Natural killer cell (primary cell): ENCODE measurements at regions of chrX and their contacts with region 1.

Region 1: GRCh38 chrX:39859991-39860861 is 237.5 kb downstream of the BCOR start:
- DNase-seq: peak; percentile 68 to 75
- ATAC-seq: peak; percentile 66 to 72 (median 71)
- H3K4me3 ChIP-seq: no peak overlapping the region
- H3K4me3 Mint-ChIP-seq: peak overlapping the region; percentile 42
- H3K27ac ChIP-seq: peak overlapping the region; percentile 35
- H3K27ac Mint-ChIP-seq: peak overlapping the region; percentile 58 to 89
- H3K4me1 ChIP-seq: peaks cover 52% of the 10 kb centered on the region
- H3K4me1 Mint-ChIP-seq: peaks cover 23 to 38% of the 10 kb centered on the region in 2 donors
- H3K27me3 ChIP-seq: no peaks in the 10 kb centered on the region
- H3K27me3 Mint-ChIP-seq: peaks cover 0 to 6% of the 10 kb centered on the region in 2 donors
- CTCF ChIP-seq: no peak

Region 2: DNA sequence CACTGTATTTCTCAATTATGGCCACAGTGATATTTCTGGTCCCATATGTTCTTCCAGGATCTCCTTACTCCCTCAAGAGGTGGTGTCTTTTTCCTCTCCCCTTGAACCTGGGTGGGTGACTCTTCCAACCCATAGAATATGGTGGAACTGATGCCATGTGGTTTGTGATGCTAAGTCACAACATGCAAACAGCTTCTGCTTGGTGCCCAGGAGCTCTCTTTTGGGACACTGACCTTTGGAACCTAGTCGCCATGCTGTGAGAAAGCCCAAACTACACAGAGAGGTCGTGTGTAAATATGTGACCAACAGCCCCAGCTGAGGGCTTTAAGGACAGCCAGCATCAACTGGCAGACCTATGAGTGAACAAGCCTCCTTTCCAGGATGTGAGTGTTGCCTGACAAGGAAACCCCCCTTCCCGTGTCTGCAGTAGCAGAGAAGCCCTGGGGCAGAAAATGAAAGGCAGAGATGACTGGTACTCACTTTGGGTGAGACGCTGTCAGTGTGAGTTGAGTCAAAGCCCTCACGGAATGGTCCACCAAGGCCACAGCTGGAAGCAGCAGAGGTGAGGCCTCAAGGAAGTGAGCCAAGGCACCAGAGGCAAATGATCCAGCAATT is 14.1 kb after region 1 on chrX:
- intact Hi-C with region 1: loop called (anchors 1 kb)
- DNase-seq: peak in 1 of 2 donors; percentile 53
- ATAC-seq: peak in 1 of 3 donors; percentile 16
- H3K4me3 ChIP-seq: no peak overlapping the region
- H3K4me3 Mint-ChIP-seq: no peak overlapping the region
- H3K27ac ChIP-seq: no peak overlapping the region
- H3K27ac Mint-ChIP-seq: no peak overlapping the region
- H3K4me1 ChIP-seq: peaks cover 21% of the 10 kb centered on the region
- H3K4me1 Mint-ChIP-seq: peaks cover 9 to 16% of the 10 kb centered on the region in 2 donors
- H3K27me3 ChIP-seq: peaks cover 4% of the 10 kb centered on the region
- H3K27me3 Mint-ChIP-seq: peaks cover 23 to 25% of the 10 kb centered on the region in 2 donors
- CTCF ChIP-seq: no peak

Region 3: DNA sequence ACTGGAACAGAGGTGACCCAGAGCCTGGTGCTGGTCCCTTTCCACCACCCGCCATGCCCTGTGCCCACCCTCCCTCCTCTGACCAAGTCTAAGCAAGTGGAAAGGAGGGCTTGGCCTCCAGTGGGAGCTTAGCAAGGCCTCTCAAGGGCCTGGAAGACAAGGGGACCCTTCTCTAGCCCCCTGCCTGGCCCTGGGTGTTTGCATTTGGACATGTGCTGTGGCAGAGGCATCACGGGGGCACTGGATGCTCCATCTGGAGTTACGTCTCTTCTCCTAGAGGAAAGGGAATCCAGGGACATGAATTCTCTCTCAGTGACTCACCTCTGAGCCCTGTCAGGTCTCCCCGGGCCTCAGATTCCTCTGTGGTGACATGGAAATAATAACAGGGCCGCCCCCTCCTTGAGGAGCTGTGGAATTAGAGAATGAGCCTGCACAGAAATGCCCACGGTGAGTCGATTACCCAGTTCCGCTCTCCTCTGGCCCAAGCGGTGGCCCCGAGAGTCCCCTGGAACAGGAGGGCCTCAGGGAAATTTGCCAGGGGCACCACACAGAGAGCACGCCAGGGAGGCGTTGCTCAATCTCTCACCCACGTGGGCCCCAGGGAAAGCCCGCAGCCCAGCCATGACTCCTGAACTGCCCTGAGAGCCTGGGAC is 47.9 kb after region 1 on chrX:
- intact Hi-C with region 1: no loop called
- DNase-seq: no peak
- ATAC-seq: no peak
- H3K4me3 ChIP-seq: no peak overlapping the region
- H3K4me3 Mint-ChIP-seq: no peak overlapping the region
- H3K27ac ChIP-seq: no peak overlapping the region
- H3K27ac Mint-ChIP-seq: no peak overlapping the region
- H3K4me1 ChIP-seq: peaks cover 12% of the 10 kb centered on the region
- H3K4me1 Mint-ChIP-seq: peaks cover 0 to 16% of the 10 kb centered on the region in 2 donors
- H3K27me3 ChIP-seq: no peaks in the 10 kb centered on the region
- H3K27me3 Mint-ChIP-seq: peaks cover 9 to 20% of the 10 kb centered on the region in 2 donors
- CTCF ChIP-seq: no peak

Region 4: DNA sequence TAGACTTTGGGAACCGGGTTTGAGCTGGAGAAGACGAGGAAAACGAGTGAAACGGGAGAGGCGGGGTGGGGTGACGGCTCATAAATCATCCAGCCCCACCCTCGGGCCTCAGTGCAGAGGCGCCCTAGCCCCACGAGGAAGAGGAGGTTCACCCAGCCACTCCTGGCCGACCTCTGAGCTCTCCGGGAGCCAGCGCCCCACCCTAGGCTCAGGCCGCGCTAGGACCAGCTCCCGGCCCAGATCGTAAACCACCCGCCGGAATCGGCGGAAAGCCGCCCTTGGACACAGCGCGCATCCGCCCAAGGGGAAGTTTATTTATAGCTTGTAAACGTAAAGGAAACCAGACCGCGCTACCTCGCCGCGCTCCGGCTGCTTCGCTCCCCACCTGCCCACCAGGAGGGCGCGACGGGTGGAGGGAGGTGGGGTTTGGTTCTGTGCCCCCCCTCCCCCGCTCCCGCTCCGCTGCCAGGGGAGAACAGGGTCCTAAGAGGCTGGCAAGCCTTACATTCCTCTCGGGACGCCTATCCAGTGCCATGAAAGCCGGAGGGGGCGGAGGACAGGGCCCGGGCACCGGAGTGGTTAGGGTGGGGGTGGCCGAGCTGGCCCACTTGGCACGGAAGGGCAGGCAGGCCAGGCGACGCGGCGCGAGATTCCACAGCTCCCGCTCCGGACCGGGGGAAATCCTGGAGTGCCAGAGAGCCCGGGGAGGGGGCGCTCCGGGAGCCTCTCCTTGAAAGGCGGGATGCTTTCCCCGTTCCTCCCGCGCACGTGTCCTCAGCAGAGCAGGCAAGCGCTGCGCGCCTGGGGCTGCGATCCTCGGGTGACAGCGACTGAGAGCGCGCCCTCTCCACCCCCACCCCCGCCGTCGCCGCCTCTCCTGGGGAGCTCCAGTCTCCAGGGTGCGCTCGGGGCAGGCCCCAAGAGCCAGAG is 153.3 kb after region 1 on chrX:
- intact Hi-C with region 1: loop called (anchors 5 kb)
- DNase-seq: peak; percentile 23 to 58
- ATAC-seq: peak; percentile 25 to 45 (median 28)
- H3K4me3 ChIP-seq: peak overlapping the region; percentile 61
- H3K4me3 Mint-ChIP-seq: peak overlapping the region; percentile 84
- H3K27ac ChIP-seq: peak overlapping the region; percentile 76
- H3K27ac Mint-ChIP-seq: peak overlapping the region in 1 of 2 donors; percentile 81
- H3K4me1 ChIP-seq: peaks cover 49% of the 10 kb centered on the region
- H3K4me1 Mint-ChIP-seq: peaks cover 0 to 20% of the 10 kb centered on the region in 2 donors
- H3K27me3 ChIP-seq: peaks cover 3% of the 10 kb centered on the region
- H3K27me3 Mint-ChIP-seq: peaks cover 10 to 22% of the 10 kb centered on the region in 2 donors
- CTCF ChIP-seq: no peak

Region 5: GRCh38 chrX:40175511-40176350 is 315.5 kb after region 1 on chrX:
- intact Hi-C with region 1: loop called (anchors 5 kb)
- DNase-seq: peak; percentile 62 to 90
- ATAC-seq: peak; percentile 39 to 75 (median 47)
- H3K4me3 ChIP-seq: peak overlapping the region; percentile 85
- H3K4me3 Mint-ChIP-seq: peak overlapping the region; percentile 78
- H3K27ac ChIP-seq: peak overlapping the region; percentile 99
- H3K27ac Mint-ChIP-seq: peak overlapping the region; percentile 93
- H3K4me1 ChIP-seq: peaks cover 56% of the 10 kb centered on the region
- H3K4me1 Mint-ChIP-seq: peaks cover 30 to 34% of the 10 kb centered on the region in 2 donors
- H3K27me3 ChIP-seq: no peaks in the 10 kb centered on the region
- H3K27me3 Mint-ChIP-seq: peaks cover 0 to 7% of the 10 kb centered on the region in 2 donors
- CTCF ChIP-seq: no peak